Naive thymus-derived CD4-positive, alpha-beta T cell (primary cell): ENCODE measurements at regions of chr13 and their contacts with region 1.

Region 1: DNA sequence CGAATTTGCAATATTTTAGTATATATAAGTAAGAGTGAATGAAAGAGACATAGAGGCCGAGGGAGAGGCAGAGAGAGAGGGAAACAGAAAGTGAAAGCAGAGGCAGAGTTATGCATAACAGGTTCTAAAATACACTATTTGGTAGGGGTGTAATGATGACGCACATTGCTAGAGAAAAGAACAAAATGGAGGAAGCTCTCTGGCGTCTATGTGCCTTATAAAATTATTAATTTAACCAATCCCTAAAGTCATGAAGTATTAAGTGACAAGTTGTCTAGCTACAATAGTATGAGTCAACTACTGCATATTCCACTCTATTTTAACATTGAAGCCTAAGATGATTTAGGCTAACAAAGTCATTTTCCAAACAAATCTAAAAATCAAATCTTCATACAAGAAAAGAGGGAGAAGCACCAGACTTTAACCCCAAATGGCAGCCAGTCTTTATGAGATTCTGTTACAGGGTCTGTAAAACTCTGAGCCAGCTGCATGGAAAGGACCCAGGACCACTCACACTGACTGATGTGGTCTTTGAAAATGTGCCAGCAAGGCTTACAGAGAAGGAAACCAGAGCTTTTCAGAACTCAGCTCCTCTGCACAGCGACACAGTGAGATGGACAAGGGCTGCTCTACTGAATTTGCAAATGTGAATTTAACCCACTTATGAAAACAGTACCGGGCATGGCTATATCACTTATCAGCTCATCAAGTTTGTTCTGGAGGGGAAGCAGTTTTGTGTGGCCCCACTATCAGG is 99.0 kb upstream of the SERP2 start:
- DNase-seq: peak in 7 of 9 donors; percentile 69 to 85 (median 82)
- ATAC-seq: peak; percentile 96
- H3K4me3 ChIP-seq: peak overlapping the region; percentile 49
- H3K4me3 Mint-ChIP-seq: peak overlapping the region; percentile 66 to 81 (median 78)
- H3K27ac ChIP-seq: peak overlapping the region; percentile 73
- H3K27ac Mint-ChIP-seq: peak overlapping the region; percentile 90 to 99 (median 96)
- H3K4me1 ChIP-seq: peaks cover 15 to 26% of the 10 kb centered on the region in 2 donors
- H3K4me1 Mint-ChIP-seq: peaks cover 18 to 71% (median 51%) of the 10 kb centered on the region in 7 donors
- H3K27me3 ChIP-seq: no peaks in the 10 kb centered on the region
- H3K27me3 Mint-ChIP-seq: no peaks in the 10 kb centered on the region

Region 2: DNA sequence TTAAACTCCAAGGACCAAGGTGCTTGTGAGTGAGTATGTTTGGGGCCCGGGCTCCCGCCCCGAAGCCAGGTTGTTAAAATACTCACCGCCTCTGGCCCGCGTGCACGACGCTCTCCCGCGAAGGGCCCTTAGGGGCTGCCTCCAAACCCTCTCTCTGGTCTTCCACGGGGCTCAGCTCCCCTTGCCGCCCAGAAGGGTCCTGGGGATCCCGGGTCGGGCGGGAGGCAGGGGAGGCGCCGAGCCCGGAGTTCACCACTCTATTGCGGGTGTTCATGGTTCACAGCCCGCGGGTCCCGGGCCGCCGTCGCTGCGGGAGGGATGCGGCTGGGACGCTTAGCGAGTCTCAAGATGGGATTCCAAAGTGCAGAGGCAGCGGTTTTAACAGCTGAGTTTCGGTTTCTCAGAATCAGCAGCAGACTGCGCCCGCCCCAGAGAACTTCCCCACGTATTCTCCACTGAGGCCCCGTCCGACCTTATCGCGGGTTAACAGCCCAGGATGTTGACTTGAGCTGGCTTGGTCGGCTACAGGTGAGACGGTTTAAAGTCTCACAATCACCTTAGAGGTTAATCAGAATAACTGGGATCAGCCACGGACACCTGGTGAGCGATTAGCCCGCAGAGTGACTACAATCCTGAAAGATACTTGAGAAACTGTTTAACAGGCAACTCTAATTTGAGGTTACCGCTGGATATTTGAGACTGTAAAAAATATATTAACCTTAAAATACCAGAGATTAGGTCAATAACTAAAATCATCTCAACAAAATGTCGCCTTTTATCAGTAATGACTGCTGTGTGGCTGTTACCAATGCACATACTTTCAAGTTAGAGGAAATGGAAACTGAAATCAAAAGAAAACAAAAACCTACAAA is 1282.5 kb before region 1 on chr13 and contains the start of gene EPSTI1:
- CTCF ChIA-PET with region 1: no interaction called
- POLR2A ChIA-PET with region 1: interaction called, 3 read pairs
- intact Hi-C with region 1: loop called in 1 of 2 experiments (anchors 5 kb)
- DNase-seq: peak; percentile 61 to 84 (median 77)
- ATAC-seq: peak; percentile 88
- H3K4me3 ChIP-seq: peak within 1 kb of the TSS; percentile 77
- H3K4me3 Mint-ChIP-seq: peak within 1 kb of the TSS; percentile 92 to 98 (median 96)
- H3K27ac ChIP-seq: peak within 1 kb of the TSS; percentile 94
- H3K27ac Mint-ChIP-seq: peak within 1 kb of the TSS; percentile 99 to 100 (median 100)
- H3K4me1 ChIP-seq: peaks cover 13 to 15% of the 10 kb centered on the region in 2 donors
- H3K4me1 Mint-ChIP-seq: peaks cover 27 to 73% (median 51%) of the 10 kb centered on the region in 7 donors
- H3K27me3 ChIP-seq: no peaks in the 10 kb centered on the region
- H3K27me3 Mint-ChIP-seq: no peaks in the 10 kb centered on the region
- total RNA-seq, gene EPSTI1: 8.4 to 125 (median 11.0) TPM

Region 3: GRCh38 chr13:44141725-44142539 is 132.7 kb before region 1 on chr13:
- CTCF ChIA-PET with region 1: no interaction called
- POLR2A ChIA-PET with region 1: interaction called, 4 read pairs
- intact Hi-C with region 1: loop called (anchors 1 to 2 kb)
- DNase-seq: peak; percentile 81 to 99 (median 88)
- ATAC-seq: peak; percentile 99
- H3K4me3 ChIP-seq: peak overlapping the region; percentile 89
- H3K4me3 Mint-ChIP-seq: peak overlapping the region; percentile 84 to 97 (median 92)
- H3K27ac ChIP-seq: peak overlapping the region; percentile 82
- H3K27ac Mint-ChIP-seq: peak overlapping the region; percentile 76 to 98 (median 95)
- H3K4me1 ChIP-seq: peaks cover 5% of the 10 kb centered on the region in 2 donors
- H3K4me1 Mint-ChIP-seq: peaks cover 6 to 23% (median 17%) of the 10 kb centered on the region in 7 donors
- H3K27me3 ChIP-seq: peaks cover 0 to 3% of the 10 kb centered on the region in 2 donors
- H3K27me3 Mint-ChIP-seq: peaks cover 0 to 51% (median 7%) of the 10 kb centered on the region in 5 donors

Region 4: GRCh38 chr13:44259045-44260027 is 15.3 kb before region 1 on chr13:
- CTCF ChIA-PET with region 1: no interaction called
- POLR2A ChIA-PET with region 1: interaction called, 7 read pairs
- intact Hi-C with region 1: loop called (anchors 1 kb)
- DNase-seq: peak in 8 of 9 donors; percentile 17 to 77 (median 35)
- ATAC-seq: peak; percentile 87
- H3K4me3 ChIP-seq: peak overlapping the region; percentile 2
- H3K4me3 Mint-ChIP-seq: peak overlapping the region; percentile 40 to 87 (median 66)
- H3K27ac ChIP-seq: no peak overlapping the region
- H3K27ac Mint-ChIP-seq: peak overlapping the region; percentile 68 to 94 (median 88)
- H3K4me1 ChIP-seq: peaks cover 7 to 10% of the 10 kb centered on the region in 2 donors
- H3K4me1 Mint-ChIP-seq: peaks cover 9 to 24% (median 19%) of the 10 kb centered on the region in 7 donors
- H3K27me3 ChIP-seq: no peaks in the 10 kb centered on the region
- H3K27me3 Mint-ChIP-seq: peaks cover 0 to 6% (median 0%) of the 10 kb centered on the region in 5 donors

Region 5: DNA sequence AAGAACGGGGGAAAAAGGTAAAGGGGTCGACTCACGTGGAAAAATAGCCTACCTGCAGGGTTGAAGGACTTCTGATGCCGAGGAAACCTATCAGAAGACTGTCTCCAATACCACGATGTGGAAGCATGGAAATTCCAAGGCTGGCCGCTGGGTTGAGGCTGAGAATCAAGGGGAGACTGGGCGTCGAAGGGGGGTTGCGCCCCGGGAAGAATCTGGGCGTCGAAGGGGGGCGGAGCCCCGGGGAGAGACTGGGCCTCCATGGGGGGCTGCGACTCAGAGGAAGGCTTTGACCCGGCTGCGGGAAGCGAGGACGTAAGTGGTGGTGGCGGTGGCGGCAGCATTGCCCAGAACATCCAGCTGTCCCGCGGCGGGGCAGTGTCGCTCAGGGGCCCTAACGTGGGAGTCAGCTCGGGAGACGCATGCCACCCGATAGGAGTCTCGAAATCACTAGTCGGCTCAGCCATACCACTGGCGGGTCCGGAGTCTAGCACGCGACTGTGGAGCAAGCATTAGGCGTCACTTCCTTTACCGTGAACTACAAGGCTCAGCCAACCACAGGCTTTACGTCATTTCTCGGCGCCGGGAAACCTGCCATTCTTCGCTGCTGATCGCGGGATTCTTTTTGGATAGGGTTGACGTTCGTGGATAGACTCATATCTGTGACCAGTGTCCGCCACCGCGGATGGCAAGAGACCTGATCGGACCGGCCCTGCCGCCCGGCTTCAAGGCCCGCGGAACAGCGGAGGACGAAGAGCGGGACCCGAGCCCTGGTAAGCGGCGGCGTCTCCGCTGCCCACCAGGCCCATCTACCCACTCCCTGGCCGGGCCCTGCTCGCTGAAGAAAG is 714.6 kb after region 1 on chr13 and contains the starts of genes GPALPP1 and NUFIP1:
- CTCF ChIA-PET with region 1: no interaction called
- POLR2A ChIA-PET with region 1: no interaction called
- intact Hi-C with region 1: loop called (anchors 1 to 10 kb)
- DNase-seq: peak; percentile 79 to 94 (median 90)
- ATAC-seq: peak; percentile 98
- H3K4me3 ChIP-seq: peak within 1 kb of the TSS; percentile 94
- H3K4me3 Mint-ChIP-seq: peak within 1 kb of the TSS; percentile 96 to 100 (median 98)
- H3K27ac ChIP-seq: peak within 1 kb of the TSS; percentile 95
- H3K27ac Mint-ChIP-seq: peak within 1 kb of the TSS; percentile 91 to 99 (median 98)
- H3K4me1 ChIP-seq: peaks cover 18 to 27% of the 10 kb centered on the region in 2 donors
- H3K4me1 Mint-ChIP-seq: peaks cover 42 to 81% (median 68%) of the 10 kb centered on the region in 7 donors
- H3K27me3 ChIP-seq: no peaks in the 10 kb centered on the region
- H3K27me3 Mint-ChIP-seq: no peaks in the 10 kb centered on the region
- total RNA-seq, gene GPALPP1: 29.7 to 43.1 (median 33.0) TPM
- total RNA-seq, gene NUFIP1: 3.7 to 6.6 (median 5.4) TPM

Region 6: GRCh38 chr13:45340926-45341750 is 1066.5 kb after region 1 on chr13 and contains the start of gene TPT1:
- CTCF ChIA-PET with region 1: no interaction called
- POLR2A ChIA-PET with region 1: no interaction called
- intact Hi-C with region 1: loop called in 1 of 2 experiments (anchors 10 kb)
- DNase-seq: peak; percentile 99 to 100 (median 99)
- ATAC-seq: peak; percentile 91
- H3K4me3 ChIP-seq: peak within 1 kb of the TSS; percentile 94
- H3K4me3 Mint-ChIP-seq: peak within 1 kb of the TSS; percentile 95 to 100 (median 98)
- H3K27ac ChIP-seq: peak within 1 kb of the TSS; percentile 99
- H3K27ac Mint-ChIP-seq: peak within 1 kb of the TSS; percentile 92 to 100 (median 99)
- H3K4me1 ChIP-seq: peaks cover 35 to 43% of the 10 kb centered on the region in 2 donors
- H3K4me1 Mint-ChIP-seq: peaks cover 35 to 70% (median 57%) of the 10 kb centered on the region in 7 donors
- H3K27me3 ChIP-seq: no peaks in the 10 kb centered on the region
- H3K27me3 Mint-ChIP-seq: no peaks in the 10 kb centered on the region
- total RNA-seq, gene TPT1: 4,230 to 13,134 (median 7,796) TPM